ENCODE measurements at regions of chr1 and their contacts with region 1.

Region 1: DNA sequence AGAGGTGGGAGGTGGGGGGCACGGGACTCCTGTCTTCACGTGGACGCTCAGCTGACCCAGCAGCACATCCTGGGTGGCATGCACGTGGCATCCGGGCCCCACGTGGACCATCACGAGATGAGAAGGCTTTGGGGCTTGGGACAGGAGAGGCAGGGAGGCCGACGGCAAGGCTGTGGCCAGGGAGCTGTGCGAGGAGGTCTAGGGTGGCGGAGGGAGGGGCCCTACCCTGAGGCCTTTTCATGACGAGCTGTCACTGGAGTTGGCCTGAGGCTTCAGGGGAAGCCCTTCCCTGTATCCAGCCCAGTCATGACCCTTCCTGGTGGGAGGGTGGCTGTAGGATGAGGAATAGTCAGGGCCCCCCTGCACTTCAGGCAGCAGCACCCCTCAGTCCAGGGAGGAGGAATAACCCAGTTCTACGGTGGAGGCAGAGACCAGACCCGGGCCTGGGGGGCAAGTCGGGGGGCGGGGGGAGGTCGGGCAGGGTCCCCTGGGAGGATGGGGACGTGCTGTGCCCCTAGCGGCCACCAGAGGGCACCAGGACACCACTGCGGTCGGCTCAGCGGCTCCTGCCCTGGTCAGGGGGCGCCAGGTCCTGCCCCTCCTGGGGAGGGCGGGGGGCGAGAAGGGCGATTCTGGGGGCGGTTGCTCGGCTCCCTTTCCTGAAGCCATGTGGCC is 2.0 kb upstream of the PERM1 start:
- DNase-seq: peak in 4 of 5 donors; percentile 37 to 71 (median 62)
- H3K4me3 ChIP-seq: no peak overlapping the region
- H3K27ac ChIP-seq: no peak overlapping the region
- H3K4me1 ChIP-seq: no peaks in the 10 kb centered on the region
- H3K27me3 ChIP-seq: no peaks in the 10 kb centered on the region
- CTCF ChIP-seq: peak; percentile 33 to 80 (median 49)
- EP300 ChIP-seq: no peak
- POLR2A ChIP-seq: no peak

Region 2: DNA sequence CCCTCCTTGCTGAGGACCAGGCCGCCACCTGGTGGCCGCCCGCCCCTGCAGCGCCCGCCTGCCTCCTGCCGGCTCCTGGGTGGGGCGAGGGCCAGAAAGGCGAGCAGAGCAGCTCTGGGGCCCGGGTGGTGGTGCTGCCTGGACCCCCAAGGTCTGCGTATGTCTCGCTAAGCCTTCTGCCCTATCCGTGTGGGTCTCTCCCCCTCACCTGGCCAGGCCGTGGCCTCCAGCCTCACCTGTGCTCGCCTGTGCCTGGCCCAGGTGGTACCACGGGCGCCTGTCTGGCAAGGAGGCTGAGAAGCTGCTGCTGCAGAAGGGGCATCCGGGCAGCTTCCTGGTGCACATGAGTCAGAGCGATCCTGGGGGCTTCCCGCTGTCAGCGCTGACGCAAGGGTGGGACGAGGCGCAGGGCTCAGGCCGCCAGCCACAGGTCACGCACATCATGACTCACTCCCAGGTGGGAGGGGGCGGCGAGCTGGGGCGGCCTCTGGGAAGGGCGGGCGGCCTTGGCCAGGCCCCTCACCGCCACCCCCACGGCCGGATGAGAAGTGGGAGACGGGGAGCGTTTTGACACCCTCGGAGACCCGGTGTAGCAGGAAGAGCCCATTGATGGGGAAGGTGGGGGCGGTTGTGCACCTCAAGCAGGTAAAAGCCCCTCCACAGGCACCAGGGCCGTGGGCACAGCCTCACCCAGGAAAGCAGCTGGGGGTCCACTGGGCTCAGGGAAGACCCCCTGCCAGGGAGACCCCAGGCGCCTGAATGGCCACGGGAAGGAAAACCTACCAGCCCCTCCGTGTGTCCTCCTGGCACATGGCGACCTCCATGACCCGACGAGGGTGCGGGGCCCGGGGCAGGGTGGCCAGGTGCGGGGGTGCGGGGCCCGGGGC is 80.3 kb after region 1 on chr1:
- intact Hi-C with region 1: loop called in 1 of 4 experiments (anchors 2 kb)
- DNase-seq: peak in 3 of 5 donors; percentile 43 to 64 (median 63)
- H3K4me3 ChIP-seq: no peak overlapping the region
- H3K27ac ChIP-seq: no peak overlapping the region
- H3K4me1 ChIP-seq: peaks cover 3% of the 10 kb centered on the region
- H3K27me3 ChIP-seq: peaks cover 9% of the 10 kb centered on the region
- CTCF ChIP-seq: peak; percentile 3 to 70 (median 60)
- EP300 ChIP-seq: no peak
- POLR2A ChIP-seq: no peak